ENCODE measurements at regions of chr5 and their contacts with region 1.

Region 1: DNA sequence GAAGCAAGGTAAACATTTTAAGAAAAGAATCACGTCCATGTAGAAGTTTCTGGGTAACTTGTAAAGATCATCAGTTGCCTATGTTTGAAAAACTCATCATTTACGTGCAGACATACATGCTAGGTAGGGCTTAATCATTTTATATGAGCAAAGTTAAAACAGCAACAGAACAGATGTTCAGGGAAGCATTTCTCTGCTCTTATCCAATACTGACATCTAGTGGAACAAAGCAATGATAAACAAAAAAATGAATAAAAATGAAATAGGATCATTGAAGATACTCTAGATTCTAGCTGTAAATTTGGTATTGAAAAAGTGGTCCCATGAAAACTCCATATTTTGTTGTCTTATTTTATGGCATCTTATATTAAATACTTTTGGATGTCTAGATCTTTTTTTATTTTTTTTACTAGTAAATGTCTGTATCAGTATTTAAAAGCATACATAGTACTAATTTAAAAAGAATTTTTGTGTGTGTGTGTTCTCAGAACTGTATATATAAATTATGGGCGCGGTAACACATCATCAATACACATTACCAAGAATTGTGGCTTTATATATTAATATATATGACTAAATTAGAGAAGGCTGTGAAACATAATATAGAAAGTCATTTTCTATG is 1050.2 kb downstream of the CDH12 start:
- DNase-seq: peak; percentile 31
- H3K4me3 ChIP-seq: no peak overlapping the region
- H3K27ac ChIP-seq: no peak overlapping the region
- H3K4me1 ChIP-seq: peaks cover 9% of the 10 kb centered on the region
- H3K27me3 ChIP-seq: no peaks in the 10 kb centered on the region
- CTCF ChIP-seq: peak; percentile 69 to 75

Region 2: DNA sequence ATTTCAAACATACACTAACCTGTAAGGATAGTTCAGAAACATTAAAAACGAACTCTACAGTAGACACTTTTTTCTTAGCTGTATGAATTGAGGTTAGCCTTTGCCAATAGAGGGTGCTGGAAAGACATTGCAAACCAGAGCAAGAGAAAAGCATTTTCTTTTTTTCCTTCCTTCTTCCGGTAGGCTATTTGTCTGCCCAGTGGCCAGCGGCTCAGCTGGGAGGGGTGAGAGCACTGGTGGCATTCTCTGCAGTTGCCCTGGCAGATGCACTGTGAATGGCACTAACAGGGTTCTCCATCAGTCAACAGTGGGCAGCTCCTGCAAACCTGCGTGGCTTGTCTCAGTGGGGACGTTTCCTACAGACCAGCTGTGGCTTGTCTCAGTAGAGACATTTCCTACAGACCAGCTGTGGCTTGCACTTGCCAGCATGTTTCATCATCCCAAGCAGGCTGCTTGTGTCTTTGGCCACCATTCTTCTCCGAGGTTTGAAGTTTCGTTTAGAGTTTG is 830.5 kb before region 1 on chr5:
- CTCF ChIA-PET with region 1: interaction called, 4 read pairs
- dilution Hi-C with region 1: no loop called
- in situ Hi-C with region 1: no loop called
- intact Hi-C with region 1: loop called (anchors 1 kb)
- DNase-seq: peak; percentile 62
- H3K4me3 ChIP-seq: peak overlapping the region in 1 of 3 experiments; percentile 39
- H3K27ac ChIP-seq: no peak overlapping the region
- H3K4me1 ChIP-seq: no peaks in the 10 kb centered on the region
- H3K27me3 ChIP-seq: no peaks in the 10 kb centered on the region
- CTCF ChIP-seq: peak; percentile 16 to 62

Region 3: DNA sequence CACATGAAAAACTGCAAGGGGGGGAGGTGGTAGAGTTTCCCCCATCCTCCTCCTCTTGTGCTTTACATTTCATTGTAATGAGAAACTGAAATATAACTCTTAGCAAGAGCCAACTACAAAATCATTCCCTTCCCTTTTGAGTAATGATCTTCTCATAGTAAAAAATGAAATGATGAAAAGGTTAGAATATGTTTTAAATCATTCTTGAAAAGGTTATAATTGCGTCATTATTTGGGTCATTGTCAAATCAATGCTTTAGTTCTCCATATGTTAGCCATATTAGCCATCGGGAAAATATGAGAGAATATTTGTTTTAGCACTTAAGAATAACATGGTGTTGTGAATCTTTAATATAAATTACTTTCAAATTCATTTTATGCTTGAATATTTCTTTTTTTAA is 629.9 kb before region 1 on chr5:
- CTCF ChIA-PET with region 1: no interaction called
- dilution Hi-C with region 1: no loop called
- in situ Hi-C with region 1: no loop called
- intact Hi-C with region 1: no loop called
- DNase-seq: no peak
- H3K4me3 ChIP-seq: no peak overlapping the region
- H3K27ac ChIP-seq: no peak overlapping the region
- H3K4me1 ChIP-seq: no peaks in the 10 kb centered on the region
- H3K27me3 ChIP-seq: no peaks in the 10 kb centered on the region
- CTCF ChIP-seq: no peak

Region 4: GRCh38 chr5:21663082-21663481 is 139.9 kb before region 1 on chr5:
- CTCF ChIA-PET with region 1: no interaction called
- dilution Hi-C with region 1: no loop called
- in situ Hi-C with region 1: no loop called
- intact Hi-C with region 1: loop called (anchors 10 kb)
- DNase-seq: no peak
- H3K4me3 ChIP-seq: no peak overlapping the region
- H3K27ac ChIP-seq: no peak overlapping the region
- H3K4me1 ChIP-seq: no peaks in the 10 kb centered on the region
- H3K27me3 ChIP-seq: no peaks in the 10 kb centered on the region
- CTCF ChIP-seq: no peak

Region 5: DNA sequence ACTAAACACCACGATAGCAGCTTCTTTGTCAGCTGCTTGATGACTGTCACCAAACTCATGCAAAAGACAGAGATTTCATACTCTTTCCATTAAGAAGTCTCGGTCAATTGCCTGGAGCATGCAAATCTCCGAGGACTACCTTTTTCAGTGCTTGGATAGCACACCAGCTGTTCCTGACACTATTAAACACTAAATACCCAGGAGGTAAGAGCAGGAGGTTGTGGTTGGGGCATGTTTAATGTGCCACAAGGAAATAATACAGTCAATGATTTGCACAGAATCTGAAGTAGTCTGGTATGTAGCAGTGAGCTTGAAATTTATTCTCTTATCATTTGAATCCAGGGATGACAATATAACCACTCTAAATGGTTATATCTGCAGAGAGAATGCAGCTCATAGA is 54.0 kb after region 1 on chr5:
- CTCF ChIA-PET with region 1: no interaction called
- dilution Hi-C with region 1: no loop called
- in situ Hi-C with region 1: no loop called
- intact Hi-C with region 1: no loop called
- DNase-seq: no peak
- H3K4me3 ChIP-seq: no peak overlapping the region
- H3K27ac ChIP-seq: no peak overlapping the region
- H3K4me1 ChIP-seq: no peaks in the 10 kb centered on the region
- H3K27me3 ChIP-seq: no peaks in the 10 kb centered on the region
- CTCF ChIP-seq: no peak